ENCODE measurements at regions of chr4 and their contacts with region 1.

Region 1: DNA sequence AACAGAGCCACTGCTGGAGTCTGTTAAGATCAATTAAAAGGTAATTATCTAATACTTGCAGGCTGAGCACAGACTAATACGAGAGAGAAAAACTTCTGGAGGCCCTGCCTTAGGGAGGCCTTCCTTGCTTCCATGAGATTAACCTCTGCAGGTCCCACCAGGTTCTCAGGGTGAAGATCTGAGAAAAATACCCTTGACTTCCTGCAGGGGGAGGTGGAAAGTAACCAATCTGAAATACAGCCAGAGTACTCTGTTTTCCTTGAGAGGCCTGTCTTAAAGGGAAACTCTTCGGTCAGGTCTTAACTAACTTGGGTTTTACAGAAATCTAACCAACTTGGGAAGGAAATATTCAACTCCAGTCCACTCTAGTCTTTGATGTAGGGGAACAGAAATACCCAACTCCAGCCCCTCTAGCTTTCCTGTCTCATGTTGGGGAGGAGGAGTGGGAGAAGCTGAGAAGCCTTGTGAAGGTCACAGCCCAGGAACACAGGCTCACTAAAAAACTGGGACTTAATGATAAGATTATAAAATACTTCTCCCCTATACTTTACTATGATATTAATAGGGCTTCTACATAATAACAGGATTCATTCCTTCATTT is 77.1 kb downstream of the TBCK start:
- DNase-seq: peak; percentile 47
- H3K4me3 ChIP-seq: no peak overlapping the region
- H3K27ac ChIP-seq: no peak overlapping the region
- H3K4me1 ChIP-seq: peaks cover 4% of the 10 kb centered on the region
- H3K27me3 ChIP-seq: no peaks in the 10 kb centered on the region
- CTCF ChIP-seq: peak; percentile 50 to 64

Region 2: GRCh38 chr4:106315968-106316772 is 77.2 kb after region 1 on chr4 and contains the starts of genes AIMP1 and TBCK:
- CTCF ChIA-PET with region 1: no interaction called
- dilution Hi-C with region 1: no loop called
- in situ Hi-C with region 1: no loop called
- intact Hi-C with region 1: loop called (anchors 5 kb)
- DNase-seq: peak; percentile 85
- H3K4me3 ChIP-seq: peak within 1 kb of the TSS; percentile 80 to 91 (median 88)
- H3K27ac ChIP-seq: peak within 1 kb of the TSS; percentile 98
- H3K4me1 ChIP-seq: peaks cover 15% of the 10 kb centered on the region
- H3K27me3 ChIP-seq: no peaks in the 10 kb centered on the region
- CTCF ChIP-seq: no peak
- total RNA-seq, gene AIMP1: 17.7 to 56.0 TPM
- total RNA-seq, gene TBCK: 28.0 to 45.3 TPM

Measured in mammary epithelial cell (primary cell).